Dendritic cell treated with granulocyte-macrophage colony-stimulating factor and Interleukin-4, amounts not matched to agents 40 ng/mL and 50 ng/mL, for 4 days (primary cell): ENCODE measurements at regions of chr16 and their contacts with region 1.

Region 1: GRCh38 chr16:30747799-30748634 is at the start of gene PHKG2:
- H3K4me3 Mint-ChIP-seq: peak within 1 kb of the TSS; percentile 98
- H3K27ac Mint-ChIP-seq: peak within 1 kb of the TSS; percentile 92
- H3K4me1 Mint-ChIP-seq: peaks cover 57% of the 10 kb centered on the region
- H3K27me3 Mint-ChIP-seq: no peaks in the 10 kb centered on the region

Region 2: DNA sequence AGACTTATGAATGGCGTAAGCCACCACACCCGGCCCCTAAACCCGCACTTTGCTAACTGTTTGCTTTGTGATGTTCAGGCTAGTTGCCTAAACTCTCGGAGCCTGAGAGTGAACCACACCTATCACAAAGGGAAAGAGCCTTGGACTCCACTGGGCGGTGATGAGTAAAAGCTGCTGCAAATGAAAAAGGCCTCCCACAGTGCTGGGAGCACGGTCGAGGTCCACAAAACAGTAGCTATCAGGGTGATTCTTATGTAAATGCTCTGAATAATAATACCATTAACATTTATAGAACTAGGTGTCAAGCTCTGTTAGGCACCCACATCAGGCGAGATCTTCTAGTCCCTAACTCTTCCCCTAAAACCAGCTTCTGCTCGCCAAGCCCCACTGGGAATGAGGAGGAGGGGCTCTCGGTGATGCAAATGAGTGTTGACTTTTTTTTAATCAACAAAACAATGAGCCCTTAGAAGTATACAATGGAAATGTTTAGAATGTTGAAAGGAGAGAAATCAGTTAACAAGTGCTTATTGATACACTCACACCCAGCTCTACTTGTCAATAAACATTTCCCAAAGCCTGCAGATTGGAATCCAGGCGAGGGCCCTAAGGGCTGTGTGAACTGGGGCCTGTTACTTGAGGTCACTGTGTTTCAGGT is 70.0 kb before region 1 on chr16:
- intact Hi-C with region 1: no loop called
- H3K4me3 Mint-ChIP-seq: no peak overlapping the region
- H3K27ac Mint-ChIP-seq: no peak overlapping the region
- H3K4me1 Mint-ChIP-seq: peaks cover 9% of the 10 kb centered on the region
- H3K27me3 Mint-ChIP-seq: peaks cover 5% of the 10 kb centered on the region

Region 3: DNA sequence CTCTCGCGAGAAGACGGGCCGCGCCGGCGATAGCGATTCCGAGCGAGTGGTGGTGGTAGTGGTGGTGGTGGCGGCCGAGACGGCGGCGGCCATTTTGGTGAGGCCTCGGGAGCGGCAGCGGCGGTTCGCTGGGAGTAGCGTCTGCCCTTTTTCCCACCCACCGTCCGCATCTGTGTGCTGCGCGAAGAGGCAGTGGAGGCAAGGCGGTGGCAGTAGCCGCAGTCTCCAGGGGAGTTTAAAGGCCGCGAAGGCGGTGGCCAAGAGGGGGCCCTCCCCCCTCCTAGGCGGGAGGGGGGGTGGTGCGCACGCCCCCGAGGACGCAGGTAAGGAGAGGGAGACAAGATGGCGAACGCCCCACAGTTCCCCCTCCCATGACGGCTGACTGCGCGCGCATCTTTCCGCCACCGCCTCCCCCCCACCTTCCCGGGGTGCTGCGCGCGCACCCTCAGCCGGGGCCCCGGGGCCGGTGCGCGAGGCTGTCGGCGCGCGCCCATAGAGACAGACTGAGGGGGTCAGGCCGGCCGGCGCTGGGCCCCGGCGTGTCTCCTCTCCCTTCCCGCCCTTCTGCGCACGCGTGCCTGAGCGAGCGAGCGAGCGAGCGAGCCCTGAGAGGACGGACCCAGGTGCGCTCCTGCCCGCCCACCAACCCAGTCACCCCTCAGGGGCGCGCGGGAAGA is 49.7 kb before region 1 on chr16:
- intact Hi-C with region 1: no loop called
- H3K4me3 Mint-ChIP-seq: peak overlapping the region; percentile 79
- H3K27ac Mint-ChIP-seq: peak overlapping the region; percentile 100
- H3K4me1 Mint-ChIP-seq: peaks cover 44% of the 10 kb centered on the region
- H3K27me3 Mint-ChIP-seq: no peaks in the 10 kb centered on the region

Region 4: GRCh38 chr16:30715737-30716445 is 32.1 kb before region 1 on chr16:
- intact Hi-C with region 1: loop called (anchors 1 kb)
- H3K4me3 Mint-ChIP-seq: peak overlapping the region; percentile 45
- H3K27ac Mint-ChIP-seq: peak overlapping the region; percentile 90
- H3K4me1 Mint-ChIP-seq: peaks cover 66% of the 10 kb centered on the region
- H3K27me3 Mint-ChIP-seq: no peaks in the 10 kb centered on the region

Region 5: DNA sequence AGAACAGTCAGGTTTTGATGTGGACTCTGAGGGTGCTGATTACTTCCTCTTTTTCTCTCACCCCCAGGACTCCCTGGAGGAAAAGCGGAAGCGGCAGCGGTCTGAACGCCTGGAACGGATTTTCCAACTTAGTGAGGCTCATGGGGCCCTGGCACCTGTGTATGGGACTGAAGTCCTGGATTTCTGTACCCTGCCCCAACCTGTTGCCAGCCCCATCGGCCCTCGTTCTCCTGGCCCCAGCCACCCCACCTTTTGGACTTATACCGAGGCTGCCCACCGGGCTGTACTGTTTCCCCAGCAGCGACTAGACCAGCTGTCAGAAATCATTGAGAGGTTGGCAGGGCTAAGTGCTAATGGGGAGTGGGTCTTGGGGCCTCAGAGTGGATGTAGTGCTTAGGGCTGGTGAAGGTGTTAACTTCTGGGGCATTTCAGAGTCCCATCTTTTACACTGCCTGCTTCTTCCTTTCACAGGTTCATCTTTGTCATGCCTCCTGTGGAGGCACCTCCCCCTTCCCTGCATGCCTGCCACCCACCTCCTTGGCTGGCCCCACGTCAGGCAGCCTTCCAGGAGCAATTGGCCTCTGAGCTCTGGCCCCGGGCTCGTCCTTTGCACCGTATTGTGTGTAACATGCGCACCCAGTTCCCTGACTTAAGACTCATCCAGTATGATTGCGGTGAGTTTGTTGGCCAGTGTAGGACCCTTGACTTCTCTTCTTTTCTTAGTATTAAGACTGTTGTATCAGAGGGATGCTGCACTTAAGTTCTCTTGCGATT is 18.9 kb before region 1 on chr16:
- intact Hi-C with region 1: no loop called
- H3K4me3 Mint-ChIP-seq: no peak overlapping the region
- H3K27ac Mint-ChIP-seq: peak overlapping the region; percentile 70
- H3K4me1 Mint-ChIP-seq: peaks cover 49% of the 10 kb centered on the region
- H3K27me3 Mint-ChIP-seq: no peaks in the 10 kb centered on the region

Region 6: DNA sequence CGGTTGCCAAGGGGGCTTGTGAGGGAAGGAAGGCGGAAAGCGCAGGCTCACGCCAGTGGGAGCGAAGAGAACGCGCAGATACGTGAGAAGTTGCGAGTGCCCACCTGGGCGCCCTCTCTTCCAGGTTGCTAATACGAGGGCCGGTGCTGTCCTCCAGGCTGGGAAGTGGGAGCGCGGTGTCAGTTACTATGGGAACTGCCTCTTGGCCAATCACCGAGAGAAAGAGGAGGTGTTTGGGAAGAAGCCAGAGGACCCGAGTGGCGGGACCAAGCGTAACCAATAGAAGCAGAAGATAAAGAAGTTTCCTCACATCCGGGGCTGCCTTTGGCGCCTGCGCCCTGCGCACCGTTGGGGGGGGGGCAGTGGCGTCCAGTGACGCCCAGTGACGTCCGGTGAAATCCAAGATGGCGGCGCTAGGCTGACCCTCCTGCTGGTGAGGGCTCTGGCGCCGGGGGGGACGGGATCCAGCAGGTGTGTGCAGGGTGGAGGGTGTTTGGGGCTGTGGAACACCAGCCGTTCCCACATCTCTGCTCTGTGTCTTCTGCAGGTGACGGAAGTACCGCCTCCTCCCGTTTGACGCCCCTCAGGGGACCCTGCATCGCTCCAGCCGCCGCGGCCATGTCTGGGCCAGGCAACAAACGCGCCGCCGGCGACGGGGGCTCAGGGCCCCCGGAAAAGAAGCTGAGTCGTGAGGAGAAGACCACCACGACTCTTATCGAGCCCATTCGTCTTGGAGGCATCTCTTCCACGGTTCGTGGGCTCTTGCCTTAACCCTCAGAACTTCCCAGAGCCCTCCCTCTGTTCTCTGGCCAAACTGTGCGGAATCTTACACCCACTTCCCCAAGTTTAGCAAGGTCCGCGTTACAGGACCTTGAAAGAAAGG is 14.2 kb after region 1 on chr16 and contains the starts of genes CFAP119 and RNF40:
- intact Hi-C with region 1: loop called (anchors 1 kb)
- H3K4me3 Mint-ChIP-seq: peak within 1 kb of the TSS; percentile 90
- H3K27ac Mint-ChIP-seq: peak within 1 kb of the TSS; percentile 95
- H3K4me1 Mint-ChIP-seq: peaks cover 59% of the 10 kb centered on the region
- H3K27me3 Mint-ChIP-seq: no peaks in the 10 kb centered on the region

Region 7: DNA sequence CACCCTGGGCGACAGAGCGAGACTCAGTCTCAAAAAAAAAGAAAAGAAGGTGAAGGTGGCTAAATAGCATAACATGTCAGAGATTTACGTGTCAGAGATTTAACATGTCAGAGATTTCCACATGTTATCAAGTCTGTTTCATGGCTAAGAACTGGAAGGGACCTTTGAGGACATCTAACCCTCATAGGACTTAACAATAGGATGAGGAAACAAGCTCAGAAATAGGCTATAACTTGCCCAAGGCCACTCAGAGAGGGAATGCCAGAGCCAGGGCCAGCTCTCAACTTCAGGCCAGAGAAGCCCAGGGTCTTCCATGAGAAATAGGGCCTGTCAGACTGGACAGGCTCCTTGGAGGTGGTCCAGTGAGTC is 65.8 kb after region 1 on chr16:
- intact Hi-C with region 1: loop called (anchors 1 kb)
- H3K4me3 Mint-ChIP-seq: peak overlapping the region; percentile 87
- H3K27ac Mint-ChIP-seq: peak overlapping the region; percentile 88
- H3K4me1 Mint-ChIP-seq: peaks cover 29% of the 10 kb centered on the region
- H3K27me3 Mint-ChIP-seq: no peaks in the 10 kb centered on the region